HAP-1 (cell line): ENCODE measurements at regions of chrX and their contacts with region 1.

Region 1: DNA sequence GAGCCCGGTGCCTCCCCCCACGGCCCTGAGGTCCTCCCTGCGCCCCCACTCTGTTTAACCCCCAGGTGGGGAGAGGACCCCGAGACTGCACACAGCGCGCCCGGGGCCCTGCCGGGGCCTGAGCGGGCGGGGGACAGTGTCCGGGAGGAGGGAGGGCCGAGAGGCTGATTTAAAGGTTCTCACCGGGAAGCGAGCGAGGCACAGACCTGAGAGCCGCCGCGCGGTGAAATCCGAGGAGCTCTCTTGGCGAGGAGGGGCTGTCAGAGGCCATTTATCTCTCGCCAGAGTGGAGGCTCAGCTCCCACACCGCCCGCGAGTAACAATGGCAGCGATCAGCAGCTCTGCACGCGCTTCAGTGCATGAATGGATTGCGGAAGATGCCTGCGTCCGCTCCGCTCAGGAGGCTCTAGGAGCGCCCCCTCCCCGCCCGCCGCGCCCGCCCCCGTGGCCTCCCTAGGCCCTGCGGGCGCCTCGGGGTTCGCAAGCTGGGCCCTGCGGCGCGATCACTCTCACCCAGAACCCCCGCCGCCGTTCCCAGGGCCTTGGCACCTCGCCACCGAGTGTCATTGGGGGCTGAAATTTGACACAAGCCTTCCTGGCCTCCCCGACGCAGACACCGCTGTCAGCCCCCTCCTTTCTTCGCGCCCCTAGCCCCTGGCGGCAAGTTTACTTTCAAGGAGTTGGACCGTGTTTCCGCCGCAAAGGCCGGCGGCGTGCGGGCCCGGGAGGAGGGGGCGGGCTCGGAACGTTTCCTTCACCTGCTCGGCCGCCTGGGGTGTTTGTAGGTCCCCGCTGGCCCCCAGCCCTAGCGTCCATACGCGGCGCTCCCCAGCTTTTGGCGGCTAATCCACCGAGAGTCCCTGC is 48.7 kb upstream of the BCOR start:
- DNase-seq: peak; percentile 52 to 77
- H3K4me3 ChIP-seq: peak overlapping the region; percentile 47
- H3K4me1 ChIP-seq: peaks cover 32% of the 10 kb centered on the region
- H3K27me3 ChIP-seq: no peaks in the 10 kb centered on the region

Region 2: GRCh38 chrX:40108959-40109287 is 37.6 kb before region 1 on chrX:
- in situ Hi-C with region 1: loop called (anchors 5 kb)
- DNase-seq: peak; percentile 52 to 82
- H3K4me3 ChIP-seq: peak overlapping the region; percentile 35
- H3K4me1 ChIP-seq: peaks cover 46% of the 10 kb centered on the region
- H3K27me3 ChIP-seq: no peaks in the 10 kb centered on the region

Region 3: DNA sequence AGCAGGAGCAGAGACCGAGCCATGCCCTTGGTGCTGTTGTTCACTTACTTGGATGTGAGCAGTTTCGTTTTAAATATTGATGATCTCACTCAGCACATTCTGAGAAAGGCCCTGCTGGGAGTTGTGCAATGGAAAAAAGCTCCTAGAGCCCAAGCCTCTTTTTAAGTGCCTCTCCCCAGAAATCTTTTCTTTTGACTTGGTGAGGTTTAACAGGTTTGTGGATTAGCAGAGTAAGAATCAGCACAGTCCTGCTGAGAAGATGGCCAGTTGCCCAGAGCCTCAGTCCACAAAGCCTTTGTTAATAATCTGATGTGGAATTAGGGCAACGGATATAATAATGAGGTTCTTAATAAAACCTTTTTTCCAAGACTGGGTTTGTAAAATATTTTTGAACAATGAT is 276.8 kb after region 1 on chrX:
- in situ Hi-C with region 1: no loop called
- DNase-seq: peak in 1 of 2 experiments; percentile 34
- H3K4me3 ChIP-seq: no peak overlapping the region
- H3K4me1 ChIP-seq: no peaks in the 10 kb centered on the region
- H3K27me3 ChIP-seq: no peaks in the 10 kb centered on the region

Region 4: GRCh38 chrX:40772290-40772689 is 625.8 kb after region 1 on chrX:
- in situ Hi-C with region 1: no loop called
- DNase-seq: no peak
- H3K4me3 ChIP-seq: no peak overlapping the region
- H3K4me1 ChIP-seq: no peaks in the 10 kb centered on the region
- H3K27me3 ChIP-seq: no peaks in the 10 kb centered on the region